AG04449 (cell line): ENCODE measurements at regions of chr13 and their contacts with region 1.

Region 1: GRCh38 chr13:95607363-95607762 is 37.1 kb downstream of the DZIP1 start:
- DNase-seq: no peak
- H3K4me3 ChIP-seq: no peak overlapping the region
- CTCF ChIP-seq: no peak

Region 2: GRCh38 chr13:95624020-95624419 is 16.7 kb after region 1 on chr13:
- CTCF ChIA-PET with region 1: interaction called, 38 read pairs
- POLR2A ChIA-PET with region 1: no interaction called
- DNase-seq: no peak
- H3K4me3 ChIP-seq: no peak overlapping the region
- CTCF ChIP-seq: peak; percentile 53

Region 3: DNA sequence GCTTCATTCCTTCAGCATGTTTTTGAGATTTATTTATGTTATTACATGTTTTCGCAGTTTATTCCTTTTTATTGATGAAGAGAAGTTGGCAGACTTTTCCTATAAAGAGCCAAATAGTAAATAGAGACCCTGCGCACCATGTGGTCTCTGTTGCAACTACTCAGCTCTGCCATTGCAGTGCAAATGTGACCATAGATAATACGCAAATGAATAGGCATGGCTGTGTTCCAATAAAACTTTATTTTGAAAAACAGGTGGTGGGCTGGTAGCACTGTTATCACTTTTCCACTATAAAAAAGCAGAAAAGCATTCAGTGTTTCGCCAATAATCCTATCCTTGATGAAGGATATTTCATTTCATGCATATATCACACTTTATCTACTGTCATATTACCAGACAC is 164.5 kb after region 1 on chr13:
- CTCF ChIA-PET with region 1: no interaction called
- POLR2A ChIA-PET with region 1: no interaction called
- DNase-seq: no peak
- H3K4me3 ChIP-seq: no peak overlapping the region
- CTCF ChIP-seq: no peak